GM18951 (cell line): ENCODE measurements at regions of chr12 and their contacts with region 1.

Region 1: GRCh38 chr12:70719672-70720420 is 82.6 kb upstream of the PTPRB start:
- POLR2A ChIP-seq: no peak

Region 2: GRCh38 chr12:69879041-69879960 is 840.5 kb before region 1 on chr12:
- in situ Hi-C with region 1: loop called (anchors 25 kb)
- POLR2A ChIP-seq: no peak

Region 3: DNA sequence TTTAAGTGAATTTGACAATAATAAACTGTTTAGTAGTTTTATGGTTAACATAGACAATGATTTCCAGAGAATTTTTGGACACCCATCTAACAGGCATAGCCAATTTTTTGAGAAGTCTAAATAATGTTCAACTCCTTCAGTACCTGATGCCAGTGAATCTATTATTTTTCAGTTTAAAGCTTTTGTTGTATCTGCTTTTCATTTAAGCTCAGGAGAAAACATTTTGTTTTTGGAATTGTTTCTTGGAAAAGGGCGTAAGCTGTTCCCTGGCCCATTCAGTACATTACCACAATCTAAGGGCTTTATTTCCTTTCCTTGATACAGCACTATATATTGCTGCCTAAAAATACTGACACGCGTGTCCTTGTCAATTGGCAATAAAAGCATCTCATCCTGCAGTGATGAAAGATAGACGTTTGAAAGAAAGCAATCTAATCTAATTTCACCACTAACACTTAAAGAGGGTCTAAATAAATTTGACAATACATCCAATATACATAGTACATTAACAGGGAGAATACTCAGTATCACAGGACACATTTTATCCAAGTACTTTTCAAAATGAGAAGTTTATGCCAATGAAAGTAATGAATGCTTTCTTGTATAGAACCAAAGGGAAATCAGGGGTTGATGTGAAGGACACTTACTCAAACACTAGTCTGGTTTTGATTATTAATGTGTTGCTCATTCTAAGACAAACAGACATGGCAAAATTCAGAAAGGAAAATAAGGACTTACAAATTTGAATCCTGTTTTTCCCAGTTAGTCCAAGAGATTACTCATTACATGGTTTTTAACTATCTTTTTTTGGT is 615.5 kb after region 1 on chr12:
- in situ Hi-C with region 1: no loop called
- POLR2A ChIP-seq: no peak